ENCODE measurements at regions of chr11 and their contacts with region 1.

Region 1: GRCh38 chr11:66222358-66223149 is 45.9 kb upstream of the RAB1B start:
- DNase-seq: peak; percentile 92
- H3K4me3 Mint-ChIP-seq: no peak overlapping the region
- H3K27ac Mint-ChIP-seq: no peak overlapping the region
- H3K4me1 Mint-ChIP-seq: peaks cover 6% of the 10 kb centered on the region
- H3K27me3 Mint-ChIP-seq: no peaks in the 10 kb centered on the region
- CTCF ChIP-seq: peak; percentile 98

Region 2: GRCh38 chr11:66186470-66186869 is 36.1 kb before region 1 on chr11:
- CTCF ChIA-PET with region 1: interaction called, 10 read pairs
- POLR2A ChIA-PET with region 1: no interaction called
- intact Hi-C with region 1: no loop called
- DNase-seq: no peak
- H3K4me3 Mint-ChIP-seq: no peak overlapping the region
- H3K27ac Mint-ChIP-seq: no peak overlapping the region
- H3K4me1 Mint-ChIP-seq: peaks cover 15% of the 10 kb centered on the region
- H3K27me3 Mint-ChIP-seq: no peaks in the 10 kb centered on the region
- CTCF ChIP-seq: no peak

Region 3: DNA sequence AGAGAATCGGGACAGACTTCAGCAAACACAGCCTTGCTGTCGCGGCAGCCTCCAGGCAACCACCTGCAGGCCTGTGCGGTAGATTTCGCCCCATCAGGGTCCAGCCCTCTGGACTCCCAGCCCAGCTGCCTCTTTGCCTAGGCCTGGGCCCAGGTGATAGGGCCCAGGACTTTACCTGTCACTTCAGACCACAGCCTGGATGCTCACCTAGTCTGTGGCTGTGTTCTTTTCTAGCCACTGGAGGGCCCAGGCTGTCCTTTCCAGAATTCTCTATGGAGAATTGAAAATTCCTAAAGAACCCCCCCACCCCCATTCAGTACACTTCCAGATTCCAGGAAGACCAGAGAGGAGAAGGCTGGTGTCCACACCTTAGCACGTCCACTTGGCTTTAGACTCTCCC is 15.3 kb after region 1 on chr11:
- CTCF ChIA-PET with region 1: interaction called, 22 read pairs
- POLR2A ChIA-PET with region 1: interaction called, 3 read pairs
- intact Hi-C with region 1: no loop called
- DNase-seq: no peak
- H3K4me3 Mint-ChIP-seq: no peak overlapping the region
- H3K27ac Mint-ChIP-seq: no peak overlapping the region
- H3K4me1 Mint-ChIP-seq: no peaks in the 10 kb centered on the region
- H3K27me3 Mint-ChIP-seq: no peaks in the 10 kb centered on the region
- CTCF ChIP-seq: no peak

Region 4: GRCh38 chr11:66258473-66258893 is 35.9 kb after region 1 on chr11:
- CTCF ChIA-PET with region 1: interaction called, 7 read pairs
- POLR2A ChIA-PET with region 1: interaction called, 4 read pairs
- intact Hi-C with region 1: loop called (anchors 1 kb)
- DNase-seq: no peak
- H3K4me3 Mint-ChIP-seq: peak overlapping the region; percentile 79
- H3K27ac Mint-ChIP-seq: peak overlapping the region; percentile 81
- H3K4me1 Mint-ChIP-seq: peaks cover 12% of the 10 kb centered on the region
- H3K27me3 Mint-ChIP-seq: no peaks in the 10 kb centered on the region
- CTCF ChIP-seq: no peak

Region 5: DNA sequence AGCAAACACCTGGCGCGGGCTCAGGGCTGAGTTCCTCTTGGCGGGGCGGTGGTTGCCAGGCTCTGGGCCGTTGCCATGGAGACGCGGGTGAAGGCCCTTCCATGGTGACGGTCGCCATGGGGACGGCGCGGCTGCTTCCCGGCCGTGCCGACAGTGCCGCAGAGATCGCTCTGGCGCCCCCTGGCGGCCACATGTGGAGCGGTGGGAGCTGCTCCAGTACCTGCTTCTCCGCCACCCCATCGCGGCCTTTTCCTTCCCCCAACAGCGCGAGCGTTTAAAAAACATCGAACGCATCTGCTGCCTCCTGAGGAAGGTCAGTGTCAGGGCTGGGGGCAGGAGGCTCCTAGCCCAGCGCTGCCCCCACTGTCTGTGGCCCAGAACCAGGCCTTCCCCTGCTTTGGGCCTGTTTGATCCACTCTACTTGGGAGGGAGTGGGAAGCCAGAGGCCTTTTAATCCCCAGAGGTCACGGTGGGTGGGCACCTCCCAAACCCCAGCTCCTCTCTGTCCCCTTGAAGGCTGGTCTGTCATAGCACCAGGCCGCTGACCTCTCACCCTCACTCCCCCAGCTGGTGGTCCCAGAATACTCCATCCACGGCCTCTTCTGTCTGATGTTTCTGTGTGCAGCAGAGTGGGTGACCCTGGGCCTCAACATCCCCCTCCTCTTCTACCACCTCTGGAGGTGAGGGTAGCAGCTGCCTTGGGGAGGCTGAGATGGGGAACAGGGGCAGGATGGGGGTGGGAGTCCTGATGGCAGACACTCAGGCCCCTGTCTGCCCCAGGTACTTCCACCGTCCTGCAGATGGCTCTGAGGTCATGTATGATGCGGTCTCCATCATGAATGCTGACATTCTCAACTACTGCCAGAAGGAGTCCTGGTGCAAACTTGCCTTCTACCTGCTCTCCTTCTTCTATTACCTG is 60.2 kb after region 1 on chr11:
- CTCF ChIA-PET with region 1: interaction called, 6 read pairs
- POLR2A ChIA-PET with region 1: interaction called, 4 read pairs
- intact Hi-C with region 1: loop called (anchors 1 kb)
- DNase-seq: peak; percentile 89
- H3K4me3 Mint-ChIP-seq: no peak overlapping the region
- H3K27ac Mint-ChIP-seq: no peak overlapping the region
- H3K4me1 Mint-ChIP-seq: no peaks in the 10 kb centered on the region
- H3K27me3 Mint-ChIP-seq: peaks cover 10% of the 10 kb centered on the region
- CTCF ChIP-seq: peak; percentile 94